ENCODE measurements at regions of chr2 and their contacts with region 1.

Region 1: GRCh38 chr2:86123328-86123925 is 17.4 kb downstream of the PTCD3 start:
- H3K4me3 Mint-ChIP-seq: no peak overlapping the region
- H3K27ac Mint-ChIP-seq: no peak overlapping the region
- H3K4me1 Mint-ChIP-seq: peaks cover 5% of the 10 kb centered on the region
- H3K27me3 Mint-ChIP-seq: no peaks in the 10 kb centered on the region

Region 2: GRCh38 chr2:85628658-85629057 is 494.8 kb before region 1 on chr2:
- intact Hi-C with region 1: loop called (anchors 10 kb)
- H3K4me3 Mint-ChIP-seq: no peak overlapping the region
- H3K27ac Mint-ChIP-seq: no peak overlapping the region
- H3K4me1 Mint-ChIP-seq: no peaks in the 10 kb centered on the region
- H3K27me3 Mint-ChIP-seq: no peaks in the 10 kb centered on the region